ENCODE measurements at regions of chr10 and their contacts with region 1.

Region 1: GRCh38 chr10:2949948-2950354 is 117.4 kb upstream of the PFKP start:
- DNase-seq: peak; percentile 69
- H3K4me3 Mint-ChIP-seq: no peak overlapping the region
- H3K27ac Mint-ChIP-seq: peak overlapping the region; percentile 50
- H3K4me1 Mint-ChIP-seq: peaks cover 31% of the 10 kb centered on the region
- H3K27me3 Mint-ChIP-seq: peaks cover 35% of the 10 kb centered on the region

Region 2: DNA sequence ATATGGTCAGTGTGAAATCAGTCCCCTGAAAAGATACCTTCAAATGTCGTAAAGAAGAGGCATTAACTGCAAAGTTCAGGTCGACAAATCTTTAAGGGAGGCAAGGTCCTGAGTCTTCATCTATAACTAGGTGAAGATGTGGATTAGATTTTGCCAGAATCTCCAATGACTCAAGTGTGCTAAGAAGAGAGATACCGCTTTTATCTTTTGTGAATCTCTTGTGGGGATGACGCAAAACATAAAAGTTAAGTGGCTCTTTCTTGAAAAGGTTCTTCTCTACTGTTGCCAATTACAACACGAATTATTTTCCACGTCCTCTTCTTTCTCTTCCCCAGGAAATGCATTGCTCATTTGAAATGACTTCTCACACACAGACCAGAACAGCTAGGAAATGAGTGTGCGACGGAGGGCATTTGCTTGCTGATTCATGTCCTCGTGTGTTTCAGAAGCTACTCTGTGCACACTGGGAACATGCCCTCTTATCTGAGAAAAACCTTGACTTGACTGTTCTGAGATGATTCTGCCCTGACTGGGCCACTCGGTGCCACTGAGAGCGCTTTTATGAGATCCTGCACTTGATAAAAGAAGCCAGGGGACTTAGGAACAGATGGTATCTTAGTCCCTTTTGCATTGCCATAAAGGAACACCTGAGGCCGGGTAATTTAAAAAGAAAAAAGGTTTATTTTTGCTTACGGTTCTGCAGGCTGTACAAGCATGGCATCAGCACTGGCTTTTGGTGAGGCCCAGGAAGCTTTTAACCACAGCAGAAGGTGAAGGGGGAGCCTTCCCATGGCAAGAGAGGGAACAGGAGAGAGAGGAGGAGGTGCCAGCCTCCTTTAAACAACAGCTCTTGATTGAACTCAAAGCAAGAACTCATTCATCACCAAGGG is 52.1 kb before region 1 on chr10:
- CTCF ChIA-PET with region 1: no interaction called
- intact Hi-C with region 1: loop called (anchors 5 kb)
- DNase-seq: peak; percentile 33
- H3K4me3 Mint-ChIP-seq: no peak overlapping the region
- H3K27ac Mint-ChIP-seq: no peak overlapping the region
- H3K4me1 Mint-ChIP-seq: peaks cover 10% of the 10 kb centered on the region
- H3K27me3 Mint-ChIP-seq: peaks cover 11% of the 10 kb centered on the region

Region 3: DNA sequence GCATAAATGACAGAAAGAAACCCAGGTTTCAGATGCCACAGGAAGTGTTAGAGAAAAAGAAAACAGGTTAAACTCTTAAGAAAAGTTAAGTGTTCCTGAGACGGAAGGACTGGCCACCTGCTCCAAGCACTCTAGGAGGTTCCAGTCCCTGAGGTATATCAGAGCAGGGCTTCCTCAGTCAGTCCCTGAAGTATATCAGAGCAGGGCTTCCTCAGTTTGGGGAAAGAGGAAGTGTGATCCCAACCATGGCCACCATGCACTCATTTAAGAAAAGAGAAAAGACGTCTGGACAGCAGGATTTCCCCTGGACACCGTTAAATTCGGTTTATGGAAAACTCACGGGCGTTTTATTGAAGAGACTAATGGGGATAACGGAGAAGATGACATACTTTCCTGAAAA is 16.0 kb before region 1 on chr10:
- CTCF ChIA-PET with region 1: no interaction called
- intact Hi-C with region 1: no loop called
- DNase-seq: no peak
- H3K4me3 Mint-ChIP-seq: no peak overlapping the region
- H3K27ac Mint-ChIP-seq: no peak overlapping the region
- H3K4me1 Mint-ChIP-seq: no peaks in the 10 kb centered on the region
- H3K27me3 Mint-ChIP-seq: peaks cover 36% of the 10 kb centered on the region

Region 4: GRCh38 chr10:2992401-2993198 is 42.6 kb after region 1 on chr10:
- CTCF ChIA-PET with region 1: no interaction called
- intact Hi-C with region 1: no loop called
- DNase-seq: no peak
- H3K4me3 Mint-ChIP-seq: no peak overlapping the region
- H3K27ac Mint-ChIP-seq: no peak overlapping the region
- H3K4me1 Mint-ChIP-seq: no peaks in the 10 kb centered on the region
- H3K27me3 Mint-ChIP-seq: peaks cover 20% of the 10 kb centered on the region